ENCODE measurements at regions of chr9 and their contacts with region 1.

Region 1: DNA sequence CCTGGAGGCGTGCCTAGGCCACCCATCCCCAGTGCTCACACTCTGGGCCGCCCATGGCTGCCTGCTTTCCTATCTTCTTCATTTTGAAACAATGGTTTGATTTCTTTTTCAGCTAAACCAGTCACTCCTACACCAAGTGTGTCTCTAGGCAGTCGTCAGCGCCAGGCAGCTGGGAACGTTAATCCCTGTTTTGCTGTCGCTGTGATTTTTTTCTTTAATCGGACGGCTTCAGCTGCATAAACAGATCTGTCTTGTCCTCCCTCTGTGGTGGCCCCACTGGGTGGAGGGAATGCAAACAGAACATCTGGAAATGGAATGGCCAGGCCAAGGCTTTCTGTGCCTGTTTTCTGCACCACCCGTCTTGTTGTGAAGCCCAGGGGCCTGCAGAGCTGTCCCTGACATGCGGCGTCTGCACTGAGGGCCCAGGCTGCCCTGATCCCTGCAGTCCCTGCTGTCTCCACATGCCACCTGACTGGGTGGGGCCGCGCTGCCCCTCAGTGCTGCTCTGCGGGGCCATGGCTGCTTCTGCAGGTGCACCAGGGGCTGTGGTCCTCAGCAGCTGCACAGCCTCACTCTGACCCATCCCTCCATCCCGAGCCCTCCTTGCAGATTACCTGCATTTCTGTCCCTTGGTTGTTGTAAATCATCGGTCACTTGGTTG is 51.5 kb downstream of the WNK2 start:
- DNase-seq: no peak
- ATAC-seq: no peak
- H3K4me3 ChIP-seq: no peak overlapping the region
- H3K4me3 Mint-ChIP-seq: no peak overlapping the region
- H3K27ac ChIP-seq: no peak overlapping the region
- H3K27ac Mint-ChIP-seq: no peak overlapping the region
- H3K4me1 ChIP-seq: peaks cover 59% of the 10 kb centered on the region
- H3K4me1 Mint-ChIP-seq: peaks cover 26 to 31% of the 10 kb centered on the region in 2 donors
- H3K27me3 ChIP-seq: peaks cover 37% of the 10 kb centered on the region
- H3K27me3 Mint-ChIP-seq: peaks cover 31 to 50% of the 10 kb centered on the region in 2 donors
- CTCF ChIP-seq: no peak

Region 2: GRCh38 chr9:92934321-92934720 is 301.1 kb before region 1 on chr9:
- intact Hi-C with region 1: no loop called
- DNase-seq: no peak
- ATAC-seq: no peak
- H3K4me3 ChIP-seq: no peak overlapping the region
- H3K4me3 Mint-ChIP-seq: no peak overlapping the region
- H3K27ac ChIP-seq: no peak overlapping the region
- H3K27ac Mint-ChIP-seq: no peak overlapping the region
- H3K4me1 ChIP-seq: no peaks in the 10 kb centered on the region
- H3K4me1 Mint-ChIP-seq: no peaks in the 10 kb centered on the region
- H3K27me3 ChIP-seq: no peaks in the 10 kb centered on the region
- H3K27me3 Mint-ChIP-seq: peaks cover 17 to 45% of the 10 kb centered on the region in 2 donors
- CTCF ChIP-seq: no peak

Region 3: DNA sequence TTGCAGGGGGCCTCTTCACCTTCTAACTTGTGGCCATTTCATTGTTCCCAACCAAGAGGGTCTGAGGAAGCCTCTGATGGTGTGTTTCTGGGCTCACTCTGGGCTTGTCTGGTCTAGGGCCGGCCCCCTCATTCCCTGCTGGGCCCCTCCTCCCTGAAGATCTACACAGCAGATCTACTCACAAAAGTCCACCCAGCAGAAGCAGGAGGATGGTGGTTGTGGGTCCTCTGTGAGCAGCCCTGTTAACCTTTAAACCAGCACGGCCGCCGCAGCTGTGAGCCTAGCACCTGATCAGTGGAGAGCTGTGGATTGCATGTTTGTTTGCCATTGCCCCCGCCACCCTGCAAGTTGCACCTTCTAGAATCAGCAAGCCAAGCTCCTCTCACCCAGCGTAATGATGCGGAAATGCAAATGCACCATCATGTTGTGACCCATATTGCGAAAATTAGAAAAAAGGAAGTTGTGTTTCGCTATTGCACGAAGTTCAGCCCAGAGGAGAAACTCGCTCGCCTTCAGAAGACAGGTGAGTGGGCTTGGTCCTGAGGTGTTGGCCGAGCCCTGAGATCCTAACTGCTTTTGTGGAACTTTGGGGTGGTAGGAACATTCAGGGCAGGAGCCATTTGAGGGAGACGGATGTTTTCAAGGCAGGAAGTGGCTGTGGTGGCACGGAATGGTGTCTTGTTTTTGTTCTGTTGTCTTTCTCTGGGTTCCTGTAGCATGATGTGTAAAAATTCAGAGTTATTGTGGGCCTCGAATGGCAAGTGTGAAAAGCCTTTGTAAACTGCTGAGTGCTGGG is 271.4 kb before region 1 on chr9:
- intact Hi-C with region 1: loop called (anchors 5 kb)
- DNase-seq: peak; percentile 78 to 91
- ATAC-seq: peak; percentile 72 to 87 (median 78)
- H3K4me3 ChIP-seq: peak overlapping the region; percentile 65
- H3K4me3 Mint-ChIP-seq: peak overlapping the region; percentile 95
- H3K27ac ChIP-seq: peak overlapping the region; percentile 93
- H3K27ac Mint-ChIP-seq: peak overlapping the region; percentile 97
- H3K4me1 ChIP-seq: peaks cover 87% of the 10 kb centered on the region
- H3K4me1 Mint-ChIP-seq: peaks cover 76 to 83% of the 10 kb centered on the region in 2 donors
- H3K27me3 ChIP-seq: no peaks in the 10 kb centered on the region
- H3K27me3 Mint-ChIP-seq: no peaks in the 10 kb centered on the region
- CTCF ChIP-seq: no peak

Region 4: DNA sequence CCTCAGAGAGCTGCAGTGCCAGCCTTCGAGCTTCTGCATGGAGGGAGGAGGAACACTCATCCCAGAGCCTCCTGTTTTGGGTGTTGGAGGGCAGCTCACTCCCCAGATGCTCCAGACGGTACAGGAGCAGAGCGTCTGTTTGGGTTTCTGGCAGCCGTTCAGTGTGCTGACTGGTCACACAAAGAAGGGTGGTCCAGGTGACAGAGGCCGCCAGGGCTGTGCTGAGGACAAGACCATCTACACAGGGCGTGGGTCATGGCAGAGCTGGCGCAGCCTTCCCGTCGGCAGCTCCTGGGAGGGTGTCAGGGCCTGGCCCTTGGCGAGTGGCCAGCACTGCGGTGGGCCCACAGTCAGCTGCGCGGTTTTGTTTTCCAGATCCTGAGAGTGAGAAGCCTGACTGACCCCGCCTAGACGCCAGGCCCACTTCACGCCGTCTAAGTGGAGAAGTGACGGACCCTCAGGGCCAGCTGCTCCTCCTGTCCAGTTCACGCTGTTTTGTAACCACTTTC is 84.6 kb after region 1 on chr9:
- intact Hi-C with region 1: loop called (anchors 5 kb)
- DNase-seq: no peak
- ATAC-seq: no peak
- H3K4me3 ChIP-seq: no peak overlapping the region
- H3K4me3 Mint-ChIP-seq: no peak overlapping the region
- H3K27ac ChIP-seq: no peak overlapping the region
- H3K27ac Mint-ChIP-seq: no peak overlapping the region
- H3K4me1 ChIP-seq: peaks cover 25% of the 10 kb centered on the region
- H3K4me1 Mint-ChIP-seq: peaks cover 20 to 21% of the 10 kb centered on the region in 2 donors
- H3K27me3 ChIP-seq: peaks cover 33% of the 10 kb centered on the region
- H3K27me3 Mint-ChIP-seq: peaks cover 40 to 54% of the 10 kb centered on the region in 2 donors
- CTCF ChIP-seq: no peak

Region 5: DNA sequence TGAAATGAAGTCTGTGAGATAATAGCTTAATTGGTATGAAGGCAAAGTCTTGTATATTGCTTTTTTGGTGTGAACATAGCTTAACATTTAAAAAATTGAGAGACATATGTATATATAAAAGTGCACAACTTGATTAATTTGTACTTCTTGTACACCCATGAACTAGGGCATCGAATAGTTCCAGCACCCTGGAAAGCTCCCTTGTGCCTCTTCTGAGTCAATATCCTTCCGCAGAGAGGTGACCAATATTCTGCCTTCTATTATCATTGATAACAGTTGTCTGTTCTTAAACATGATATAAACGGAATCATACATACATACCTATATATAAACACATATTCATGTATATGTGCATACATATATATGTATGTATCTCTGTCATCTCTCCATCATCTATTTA is 526.4 kb after region 1 on chr9:
- intact Hi-C with region 1: no loop called
- DNase-seq: no peak
- ATAC-seq: no peak
- H3K4me3 ChIP-seq: no peak overlapping the region
- H3K4me3 Mint-ChIP-seq: no peak overlapping the region
- H3K27ac ChIP-seq: no peak overlapping the region
- H3K27ac Mint-ChIP-seq: no peak overlapping the region
- H3K4me1 ChIP-seq: no peaks in the 10 kb centered on the region
- H3K4me1 Mint-ChIP-seq: no peaks in the 10 kb centered on the region
- H3K27me3 ChIP-seq: peaks cover 2% of the 10 kb centered on the region
- H3K27me3 Mint-ChIP-seq: peaks cover 5 to 18% of the 10 kb centered on the region in 2 donors
- CTCF ChIP-seq: no peak

Region 6: DNA sequence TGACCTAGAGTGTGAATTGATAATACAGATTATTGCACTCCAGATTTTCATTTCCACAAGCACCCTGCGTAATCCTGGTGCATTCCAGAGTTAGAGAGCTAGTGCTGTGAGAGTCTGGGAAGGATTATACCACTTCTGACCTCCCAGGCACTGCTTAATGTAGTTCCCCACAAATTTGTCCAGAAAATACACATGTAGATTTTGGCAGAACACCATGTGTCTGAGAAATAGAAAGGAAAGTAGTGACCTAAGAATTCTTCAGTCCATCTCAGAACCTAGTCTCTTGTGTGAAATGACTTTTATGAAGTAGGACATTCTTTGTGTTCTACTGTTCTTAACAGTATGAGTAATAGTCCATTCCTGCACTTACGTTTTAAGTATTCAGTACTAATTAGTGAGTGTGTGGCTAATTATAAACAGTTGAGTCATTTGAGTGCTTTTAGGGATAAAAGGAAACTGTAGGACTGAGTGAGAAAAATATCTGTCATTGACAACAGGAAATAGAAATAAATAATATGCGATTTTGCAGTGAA is 821.1 kb after region 1 on chr9:
- intact Hi-C with region 1: no loop called
- DNase-seq: no peak
- ATAC-seq: no peak
- H3K4me3 ChIP-seq: no peak overlapping the region
- H3K4me3 Mint-ChIP-seq: no peak overlapping the region
- H3K27ac ChIP-seq: no peak overlapping the region
- H3K27ac Mint-ChIP-seq: no peak overlapping the region
- H3K4me1 ChIP-seq: no peaks in the 10 kb centered on the region
- H3K4me1 Mint-ChIP-seq: no peaks in the 10 kb centered on the region
- H3K27me3 ChIP-seq: no peaks in the 10 kb centered on the region
- H3K27me3 Mint-ChIP-seq: peaks cover 0 to 5% of the 10 kb centered on the region in 2 donors
- CTCF ChIP-seq: no peak